B cell (primary cell): ENCODE measurements at regions of chr3 and their contacts with region 1.

Region 1: GRCh38 chr3:42036483-42036823 is 54.7 kb upstream of the TRAK1 start:
- DNase-seq: no peak
- ATAC-seq: peak; percentile 37
- H3K4me3 ChIP-seq: no peak overlapping the region
- H3K4me3 Mint-ChIP-seq: peak overlapping the region; percentile 73
- H3K27ac ChIP-seq: peak overlapping the region; percentile 0 to 49
- H3K27ac Mint-ChIP-seq: peak overlapping the region; percentile 94
- H3K4me1 ChIP-seq: peaks cover 58 to 82% of the 10 kb centered on the region in 2 donors
- H3K4me1 Mint-ChIP-seq: peaks cover 82% of the 10 kb centered on the region
- H3K27me3 ChIP-seq: no peaks in the 10 kb centered on the region
- H3K27me3 Mint-ChIP-seq: no peaks in the 10 kb centered on the region
- CTCF ChIP-seq: no peak

Region 2: GRCh38 chr3:41846850-41847249 is 189.6 kb before region 1 on chr3:
- CTCF ChIA-PET with region 1: no interaction called
- POLR2A ChIA-PET with region 1: no interaction called
- intact Hi-C with region 1: no loop called
- DNase-seq: no peak
- ATAC-seq: no peak
- H3K4me3 ChIP-seq: no peak overlapping the region
- H3K4me3 Mint-ChIP-seq: no peak overlapping the region
- H3K27ac ChIP-seq: no peak overlapping the region
- H3K27ac Mint-ChIP-seq: no peak overlapping the region
- H3K4me1 ChIP-seq: no peaks in the 10 kb centered on the region
- H3K4me1 Mint-ChIP-seq: no peaks in the 10 kb centered on the region
- H3K27me3 ChIP-seq: no peaks in the 10 kb centered on the region
- H3K27me3 Mint-ChIP-seq: no peaks in the 10 kb centered on the region
- CTCF ChIP-seq: no peak

Region 3: DNA sequence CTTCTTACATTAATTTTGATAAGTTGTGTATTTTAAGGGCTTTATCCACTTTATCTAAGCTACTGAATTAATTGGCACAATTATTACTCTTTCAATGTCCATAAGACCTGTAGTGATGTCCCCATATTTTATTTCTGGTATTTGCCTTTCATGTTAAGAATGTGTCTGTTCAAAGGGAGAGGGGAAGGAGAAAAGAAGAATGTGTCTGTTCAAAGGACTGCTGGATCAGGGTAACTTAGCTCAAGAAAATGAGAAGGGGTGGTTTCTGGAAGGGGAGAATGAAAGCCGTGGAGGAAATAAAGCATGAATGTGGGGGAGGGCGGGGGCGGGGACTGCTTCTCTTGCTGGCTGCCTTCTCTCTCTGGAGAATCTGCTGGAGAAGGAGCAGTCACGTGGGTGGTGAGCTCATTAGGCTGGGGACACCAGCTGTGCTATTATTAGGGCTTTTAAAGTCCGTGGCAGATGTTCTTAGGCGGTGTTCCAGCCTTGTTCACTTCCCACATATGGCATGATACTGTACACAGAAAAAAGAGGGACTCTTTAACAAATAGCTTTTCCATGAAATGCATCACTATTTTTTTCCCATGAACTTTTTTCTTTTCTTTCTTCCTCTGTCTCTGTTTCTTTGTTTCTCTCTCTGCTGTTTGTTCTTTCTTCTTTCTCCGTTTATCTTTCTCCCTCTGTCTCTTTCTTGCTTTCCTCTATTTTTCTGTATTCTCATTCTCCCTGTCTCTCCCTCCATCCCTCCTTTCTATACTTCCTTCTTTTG is 10.9 kb before region 1 on chr3:
- CTCF ChIA-PET with region 1: no interaction called
- POLR2A ChIA-PET with region 1: interaction called, 6 read pairs
- intact Hi-C with region 1: loop called (anchors 2 kb)
- DNase-seq: peak; percentile 65
- ATAC-seq: peak; percentile 62
- H3K4me3 ChIP-seq: peak overlapping the region in 2 of 5 experiments; percentile 14 to 18
- H3K4me3 Mint-ChIP-seq: peak overlapping the region; percentile 68
- H3K27ac ChIP-seq: peak overlapping the region; percentile 59 to 81
- H3K27ac Mint-ChIP-seq: peak overlapping the region; percentile 69
- H3K4me1 ChIP-seq: peaks cover 56 to 70% of the 10 kb centered on the region in 2 donors
- H3K4me1 Mint-ChIP-seq: peaks cover 76% of the 10 kb centered on the region
- H3K27me3 ChIP-seq: no peaks in the 10 kb centered on the region
- H3K27me3 Mint-ChIP-seq: no peaks in the 10 kb centered on the region
- CTCF ChIP-seq: no peak